ENCODE measurements at regions of chr9 and their contacts with region 1.

Region 1: GRCh38 chr9:134983074-134983473 is 65.4 kb upstream of the FCN1 start:
- DNase-seq: peak; percentile 58
- H3K4me3 ChIP-seq: no peak overlapping the region
- H3K27ac ChIP-seq: no peak overlapping the region
- H3K4me1 ChIP-seq: peaks cover 5% of the 10 kb centered on the region
- H3K27me3 ChIP-seq: peaks cover 28% of the 10 kb centered on the region
- CTCF ChIP-seq: peak; percentile 80

Region 2: GRCh38 chr9:133916159-133916541 is 1066.9 kb before region 1 on chr9:
- intact Hi-C with region 1: no loop called
- DNase-seq: no peak
- H3K4me3 ChIP-seq: no peak overlapping the region
- H3K27ac ChIP-seq: no peak overlapping the region
- H3K4me1 ChIP-seq: peaks cover 30% of the 10 kb centered on the region
- H3K27me3 ChIP-seq: no peaks in the 10 kb centered on the region
- CTCF ChIP-seq: no peak

Region 3: DNA sequence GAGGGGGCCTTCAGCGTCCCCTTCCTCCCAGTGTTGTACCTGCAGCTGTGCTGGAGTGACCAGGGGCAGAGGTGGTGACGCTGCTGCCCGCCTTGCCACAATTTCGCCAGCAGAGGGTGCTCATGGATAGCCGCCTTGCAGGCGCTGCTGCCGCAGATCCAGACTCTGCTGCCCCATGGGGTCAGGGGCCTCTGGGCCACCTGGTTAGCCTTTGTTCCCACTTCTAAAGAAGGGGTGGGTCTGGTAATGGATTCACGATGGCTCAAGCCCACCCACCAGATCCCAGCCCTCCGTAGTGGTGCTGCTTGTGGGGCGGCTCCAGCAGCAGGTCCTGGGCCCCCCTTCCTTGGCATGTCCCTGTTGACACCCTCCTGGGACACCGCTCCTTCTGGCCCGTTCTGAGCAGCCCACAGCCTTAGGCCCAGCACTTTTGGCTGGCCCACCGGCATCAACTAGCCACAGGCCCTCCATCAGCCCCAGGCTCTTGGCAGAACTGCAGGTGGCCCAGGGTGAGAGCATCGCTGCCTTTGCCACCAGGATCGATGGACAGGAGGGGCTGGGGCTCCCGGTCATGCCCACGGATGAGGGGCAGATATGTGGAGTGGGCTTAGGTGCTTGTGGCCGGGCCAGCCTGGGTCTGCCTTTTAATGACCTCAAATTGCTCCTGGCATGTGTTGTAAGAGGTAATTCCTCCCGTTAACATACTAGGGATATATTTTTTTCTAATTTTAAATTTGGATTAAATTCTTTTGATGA is 284.3 kb before region 1 on chr9:
- intact Hi-C with region 1: loop called (anchors 10 kb)
- DNase-seq: peak; percentile 67
- H3K4me3 ChIP-seq: no peak overlapping the region
- H3K27ac ChIP-seq: peak overlapping the region; percentile 50
- H3K4me1 ChIP-seq: peaks cover 31% of the 10 kb centered on the region
- H3K27me3 ChIP-seq: peaks cover 4% of the 10 kb centered on the region
- CTCF ChIP-seq: peak; percentile 96

Region 4: GRCh38 chr9:134778841-134779411 is 204.1 kb before region 1 on chr9:
- intact Hi-C with region 1: loop called (anchors 10 kb)
- DNase-seq: peak; percentile 61
- H3K4me3 ChIP-seq: no peak overlapping the region
- H3K27ac ChIP-seq: no peak overlapping the region
- H3K4me1 ChIP-seq: peaks cover 37% of the 10 kb centered on the region
- H3K27me3 ChIP-seq: no peaks in the 10 kb centered on the region
- CTCF ChIP-seq: peak; percentile 80

Region 5: GRCh38 chr9:135039268-135039870 is 56.3 kb after region 1 on chr9:
- intact Hi-C with region 1: no loop called
- DNase-seq: no peak
- H3K4me3 ChIP-seq: no peak overlapping the region
- H3K27ac ChIP-seq: no peak overlapping the region
- H3K4me1 ChIP-seq: no peaks in the 10 kb centered on the region
- H3K27me3 ChIP-seq: peaks cover 73% of the 10 kb centered on the region
- CTCF ChIP-seq: no peak

Measured in left ventricle myocardium inferior (tissue), 1 donor.